Transverse colon (tissue), 4 donors: ENCODE measurements at regions of chr2 and their contacts with region 1.

Region 1: GRCh38 chr2:96760036-96760985 is at the start of gene CNNM4:
- DNase-seq: peak; percentile 97
- H3K4me3 ChIP-seq: peak within 1 kb of the TSS; percentile 53 to 85 (median 74)
- H3K27ac ChIP-seq: peak within 1 kb of the TSS; percentile 84 to 92 (median 88)
- H3K4me1 ChIP-seq: peaks cover 6 to 60% (median 43%) of the 10 kb centered on the region in 4 donors
- H3K27me3 ChIP-seq: no peaks in the 10 kb centered on the region
- CTCF ChIP-seq: peak in 3 of 5 experiments; percentile 4 to 40 (median 35)
- EP300 ChIP-seq: no peak
- POLR2A ChIP-seq: peak; percentile 10
- total RNA-seq, gene CNNM4: 66.5 to 134 (median 85.7) TPM

Region 2: DNA sequence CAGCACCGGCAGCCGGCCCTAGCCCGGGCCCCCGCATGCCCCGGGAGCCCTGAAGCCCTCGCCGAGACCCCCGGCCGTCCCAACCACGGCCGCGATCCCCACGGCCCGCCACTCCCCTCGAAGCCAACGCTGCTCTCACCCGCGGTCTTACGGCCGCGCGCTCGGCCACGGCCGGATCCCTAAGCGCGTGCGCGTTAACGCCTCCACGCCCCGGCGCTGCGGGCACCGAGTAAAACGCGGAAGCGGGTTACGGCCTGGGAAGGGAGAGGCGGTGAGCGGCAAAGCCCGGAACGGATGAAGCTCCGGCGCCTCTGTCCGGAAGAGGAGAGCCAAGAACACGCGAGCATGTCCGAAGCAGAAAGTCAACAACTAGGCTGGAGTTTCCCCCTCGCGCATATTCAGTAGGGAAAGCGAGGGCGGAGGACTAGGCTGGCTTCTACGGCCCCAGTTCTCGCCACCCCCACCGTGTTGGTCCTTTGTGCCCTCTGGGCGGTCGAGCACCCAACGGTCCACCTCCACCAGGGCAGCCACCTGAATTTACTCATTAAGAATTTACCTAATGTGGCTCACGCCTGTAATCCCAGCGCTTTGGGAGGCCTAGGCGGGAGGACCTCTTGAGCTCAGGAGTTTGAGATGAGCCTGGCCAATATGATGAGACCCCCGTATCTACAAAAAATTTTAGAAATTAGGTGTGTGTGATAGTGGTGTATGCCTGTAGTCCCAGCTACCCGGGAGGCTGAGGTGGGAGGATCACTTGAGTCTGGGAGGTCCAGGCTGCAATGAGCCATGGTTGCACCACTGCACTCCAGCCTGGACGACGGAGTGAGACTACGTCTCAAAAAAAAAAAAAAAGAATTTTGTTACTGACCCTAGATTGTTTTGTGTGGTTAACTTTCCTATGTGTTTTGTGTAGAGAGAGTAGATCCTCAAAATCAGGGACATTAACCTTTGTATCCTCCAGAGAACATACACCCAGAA is 121.9 kb before region 1 on chr2 and contains the start of gene KANSL3:
- in situ Hi-C with region 1: no loop called
- intact Hi-C with region 1: loop called (anchors 10 kb)
- DNase-seq: peak; percentile 92
- H3K4me3 ChIP-seq: peak within 1 kb of the TSS; percentile 36 to 74 (median 62)
- H3K27ac ChIP-seq: peak within 1 kb of the TSS; percentile 89 to 96 (median 94)
- H3K4me1 ChIP-seq: peaks cover 8 to 37% (median 21%) of the 10 kb centered on the region in 4 donors
- H3K27me3 ChIP-seq: no peaks in the 10 kb centered on the region
- CTCF ChIP-seq: peak in 2 of 5 experiments; percentile 12 to 17
- EP300 ChIP-seq: no peak
- POLR2A ChIP-seq: peak; percentile 93
- total RNA-seq, gene KANSL3: 45.6 to 59.9 (median 53.4) TPM

Region 3: DNA sequence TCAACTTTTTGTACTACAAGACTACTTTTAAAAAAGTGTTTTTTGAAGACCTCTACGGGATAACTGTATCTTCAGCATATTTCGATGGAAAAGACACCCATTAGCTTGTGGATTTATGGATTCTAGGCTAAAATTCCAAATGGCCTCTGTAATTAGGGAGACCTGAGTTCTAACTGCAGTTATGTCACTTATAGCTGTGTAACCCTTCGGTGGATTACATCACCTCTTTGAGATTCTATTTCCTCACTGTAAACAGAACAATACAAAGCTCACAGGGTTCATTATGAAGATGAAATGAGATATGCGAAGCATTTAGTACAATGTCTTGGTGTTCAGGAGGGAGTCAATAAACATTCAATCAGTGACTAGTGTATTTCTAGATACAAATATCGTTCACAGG is 44.7 kb before region 1 on chr2:
- in situ Hi-C with region 1: no loop called
- intact Hi-C with region 1: no loop called
- DNase-seq: no peak
- H3K4me3 ChIP-seq: no peak overlapping the region
- H3K27ac ChIP-seq: peak overlapping the region in 1 of 4 donors; percentile 74
- H3K4me1 ChIP-seq: peaks cover 0 to 18% (median 3%) of the 10 kb centered on the region in 4 donors
- H3K27me3 ChIP-seq: no peaks in the 10 kb centered on the region
- CTCF ChIP-seq: no peak
- EP300 ChIP-seq: no peak
- POLR2A ChIP-seq: no peak

Region 4: GRCh38 chr2:96816128-96816835 is 56.0 kb after region 1 on chr2 and contains the start of gene CNNM3:
- in situ Hi-C with region 1: no loop called
- intact Hi-C with region 1: loop called (anchors 10 kb)
- DNase-seq: peak; percentile 98
- H3K4me3 ChIP-seq: peak within 1 kb of the TSS; percentile 57 to 93 (median 74)
- H3K27ac ChIP-seq: peak within 1 kb of the TSS; percentile 89 to 100 (median 98)
- H3K4me1 ChIP-seq: peaks cover 36 to 72% (median 52%) of the 10 kb centered on the region in 4 donors
- H3K27me3 ChIP-seq: no peaks in the 10 kb centered on the region
- CTCF ChIP-seq: peak; percentile 59 to 89 (median 65)
- EP300 ChIP-seq: no peak
- POLR2A ChIP-seq: peak; percentile 89
- total RNA-seq, gene CNNM3: 14.2 to 54.3 (median 22.3) TPM

Region 5: DNA sequence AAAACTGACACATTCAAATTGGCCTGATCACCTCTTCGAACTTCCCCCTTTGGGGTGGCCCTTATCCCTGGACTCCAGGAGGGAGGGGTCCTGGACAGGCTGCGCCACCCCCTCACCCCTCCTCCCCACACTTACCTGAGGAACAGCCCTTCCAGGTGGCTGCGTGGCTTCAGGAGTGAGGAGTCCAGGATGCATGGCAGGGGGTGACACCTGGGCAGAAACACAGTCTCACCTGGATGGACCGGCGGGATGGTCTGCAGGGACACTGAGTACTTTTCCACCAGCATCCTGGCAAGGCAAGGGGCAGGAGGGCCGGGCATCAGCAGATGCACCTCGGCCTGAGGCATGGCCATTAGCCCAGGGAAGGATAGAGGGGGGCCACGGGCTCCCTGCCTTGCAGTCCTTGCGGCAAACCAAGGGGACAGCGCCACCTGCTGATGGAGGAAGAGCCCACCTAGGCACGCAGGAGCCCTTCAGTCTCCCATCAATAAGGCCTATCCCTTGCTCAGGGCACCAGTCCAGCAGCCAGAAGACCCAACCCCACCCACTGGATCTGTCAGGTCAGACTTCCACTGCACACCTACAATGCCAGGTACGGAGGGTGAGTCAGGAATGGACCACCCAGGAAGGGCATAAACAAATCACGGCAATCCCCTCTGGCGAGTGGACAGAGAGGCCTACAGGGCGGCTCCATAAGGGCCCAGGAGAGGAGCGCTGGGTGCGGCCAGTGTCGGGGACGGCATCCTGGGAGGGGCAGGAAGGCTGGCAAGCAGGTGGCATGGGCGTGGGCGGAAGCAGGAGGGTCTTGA is 200.0 kb after region 1 on chr2:
- in situ Hi-C with region 1: no loop called
- intact Hi-C with region 1: loop called (anchors 10 kb)
- DNase-seq: peak; percentile 91
- H3K4me3 ChIP-seq: no peak overlapping the region
- H3K27ac ChIP-seq: peak overlapping the region in 3 of 4 donors; percentile 46 to 59 (median 47)
- H3K4me1 ChIP-seq: peaks cover 0 to 40% (median 19%) of the 10 kb centered on the region in 4 donors
- H3K27me3 ChIP-seq: no peaks in the 10 kb centered on the region
- CTCF ChIP-seq: peak; percentile 84 to 94 (median 89)
- EP300 ChIP-seq: no peak
- POLR2A ChIP-seq: no peak